Activated CD8-positive, alpha-beta T cell treated with anti-CD3 and anti-CD28 coated beads, Interleukin-2, amount 10 ng/mL, durations not matched to agents 7 days and 5 days (primary cell): ENCODE measurements at regions of chr6 and their contacts with region 1.

Region 1: DNA sequence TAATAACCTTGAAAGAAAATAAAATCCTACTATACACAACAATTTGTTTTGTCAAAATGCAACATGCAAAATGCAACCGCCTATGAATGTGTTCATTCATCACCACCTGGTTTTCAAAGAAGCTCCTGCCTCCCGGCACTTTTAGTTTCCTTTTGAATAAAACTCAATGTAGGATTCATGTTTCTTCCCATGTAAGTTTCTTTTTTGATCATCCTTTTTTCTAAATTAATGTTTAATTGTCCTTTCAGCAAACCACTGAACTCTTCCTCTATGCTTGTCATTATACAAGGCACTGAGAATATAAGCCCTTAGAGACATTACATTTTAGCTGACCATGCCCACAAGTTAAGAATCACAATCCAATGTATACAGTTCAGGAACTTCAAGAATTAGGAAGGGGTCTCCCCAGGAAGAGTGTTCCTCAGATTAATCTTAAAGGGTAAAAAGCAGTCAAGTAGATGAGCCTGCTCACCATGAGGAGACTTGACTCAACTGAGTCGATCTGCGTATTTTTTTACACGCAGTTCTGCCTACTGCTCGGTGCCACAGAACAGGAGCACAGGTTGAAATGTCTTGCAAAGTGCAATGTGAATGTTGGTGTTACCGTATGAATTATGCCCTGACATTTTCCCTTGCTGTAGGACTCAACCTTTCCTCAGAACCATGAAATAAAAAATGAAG is 7.2 kb upstream of the THEMIS start:
- DNase-seq: no peak
- ATAC-seq: peak; percentile 59
- H3K4me3 Mint-ChIP-seq: peak overlapping the region; percentile 79
- H3K27ac Mint-ChIP-seq: peak overlapping the region; percentile 84
- H3K4me1 Mint-ChIP-seq: peaks cover 65% of the 10 kb centered on the region
- H3K27me3 Mint-ChIP-seq: no peaks in the 10 kb centered on the region

Region 2: GRCh38 chr6:127886603-127887002 is 21.5 kb before region 1 on chr6:
- CTCF ChIA-PET with region 1: no interaction called
- POLR2A ChIA-PET with region 1: no interaction called
- DNase-seq: no peak
- ATAC-seq: no peak
- H3K4me3 Mint-ChIP-seq: no peak overlapping the region
- H3K27ac Mint-ChIP-seq: no peak overlapping the region
- H3K4me1 Mint-ChIP-seq: peaks cover 79% of the 10 kb centered on the region
- H3K27me3 Mint-ChIP-seq: no peaks in the 10 kb centered on the region

Region 3: GRCh38 chr6:127918506-127919427 is 10.7 kb after region 1 on chr6:
- CTCF ChIA-PET with region 1: interaction called, 29 read pairs
- POLR2A ChIA-PET with region 1: interaction called, 8 read pairs
- DNase-seq: peak; percentile 56
- ATAC-seq: peak; percentile 69
- H3K4me3 Mint-ChIP-seq: peak overlapping the region; percentile 71
- H3K27ac Mint-ChIP-seq: peak overlapping the region; percentile 85
- H3K4me1 Mint-ChIP-seq: peaks cover 85% of the 10 kb centered on the region
- H3K27me3 Mint-ChIP-seq: no peaks in the 10 kb centered on the region